IMR-90 (cell line): ENCODE measurements at regions of chr4 and their contacts with region 1.

Region 1: DNA sequence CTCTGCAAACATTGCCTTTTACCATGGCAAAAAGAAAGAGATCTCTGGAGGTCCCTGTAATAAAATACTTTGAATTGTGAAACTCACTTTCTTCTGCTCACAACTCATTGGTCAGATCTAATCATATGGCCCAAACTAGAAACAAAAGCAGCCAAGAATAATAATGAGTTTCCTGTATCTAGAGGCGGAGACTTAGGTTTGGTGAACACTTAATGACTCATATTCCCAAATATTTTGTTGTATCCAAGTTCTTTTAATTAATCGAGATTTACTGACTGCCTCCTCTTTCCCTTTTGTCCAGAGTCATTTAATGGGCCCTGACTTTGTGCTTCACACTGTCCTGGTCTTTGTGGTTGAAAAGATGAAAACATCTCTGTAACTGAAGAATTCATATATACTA is 190.6 kb downstream of the CCSER1 start:
- DNase-seq: peak; percentile 94
- ATAC-seq: peak; percentile 82
- H3K4me3 ChIP-seq: peak overlapping the region; percentile 31; the same call in 1 of the 2 replicates
- H3K27ac ChIP-seq: peak overlapping the region; percentile 77; the same call in 1 of the 2 replicates
- H3K4me1 ChIP-seq: peaks cover 3% of the 10 kb centered on the region
- H3K27me3 ChIP-seq: 0 out of 2 replicates have a peak, but pooled peaks cover 2% of the 10 kb centered on the region
- CTCF ChIP-seq: no peak
- POLR2A ChIP-seq: 0 out of 2 replicates have a peak, but pooled peaks have one; percentile 48
- RAD21 ChIP-seq: no peak

Region 2: DNA sequence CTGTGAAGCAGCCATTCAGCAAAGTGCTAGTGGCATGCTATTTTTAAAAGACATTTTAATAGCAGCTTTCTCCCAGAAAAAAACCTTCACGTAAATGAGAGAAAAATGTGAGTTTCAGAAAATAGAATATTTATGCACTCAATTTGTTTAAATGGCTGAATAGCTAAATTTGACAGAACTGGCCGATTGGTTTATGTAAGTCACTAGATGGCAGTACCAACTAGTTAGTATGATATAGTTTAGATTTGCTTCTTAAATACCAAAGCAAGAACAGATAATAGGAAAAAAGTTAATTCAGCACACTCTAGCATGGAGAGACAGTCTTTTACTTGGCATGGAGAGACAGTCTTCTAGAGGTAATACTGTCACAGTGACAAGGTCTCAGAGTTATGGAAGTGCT is 730.9 kb before region 1 on chr4:
- CTCF ChIA-PET with region 1: no interaction called
- POLR2A ChIA-PET with region 1: no interaction called
- dilution Hi-C with region 1: no loop called
- in situ Hi-C with region 1: no loop called
- intact Hi-C with region 1: no loop called
- DNase-seq: peak; percentile 20
- ATAC-seq: peak; percentile 48; the same call in 1 of the 2 replicates
- H3K4me3 ChIP-seq: no peak overlapping the region
- H3K27ac ChIP-seq: no peak overlapping the region
- H3K4me1 ChIP-seq: no peaks in the 10 kb centered on the region
- H3K27me3 ChIP-seq: no peaks in the 10 kb centered on the region
- CTCF ChIP-seq: no peak
- POLR2A ChIP-seq: no peak
- RAD21 ChIP-seq: peak; percentile 17; the same call in 1 of the 2 replicates

Region 3: DNA sequence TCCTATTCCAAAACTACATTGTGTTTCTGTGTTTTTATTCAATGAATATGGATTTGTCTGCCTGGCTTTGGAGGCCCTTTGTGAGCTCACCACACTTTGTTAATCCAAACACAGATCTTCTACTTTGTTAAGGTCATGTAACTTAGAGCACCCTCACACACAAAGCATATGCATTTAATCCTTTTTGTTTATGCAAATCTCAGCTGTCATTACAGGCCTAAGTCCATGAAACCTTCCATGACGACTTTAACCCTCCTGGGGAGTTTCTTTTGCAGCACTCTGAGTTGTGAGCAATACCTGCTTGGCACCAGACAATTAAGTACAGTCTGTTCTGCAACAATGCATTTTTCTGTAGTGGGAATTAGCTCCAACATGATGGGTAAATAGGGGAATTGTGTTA is 175.7 kb before region 1 on chr4:
- CTCF ChIA-PET with region 1: no interaction called
- POLR2A ChIA-PET with region 1: no interaction called
- dilution Hi-C with region 1: no loop called
- in situ Hi-C with region 1: no loop called
- intact Hi-C with region 1: no loop called
- DNase-seq: no peak
- ATAC-seq: no peak
- H3K4me3 ChIP-seq: no peak overlapping the region
- H3K27ac ChIP-seq: no peak overlapping the region
- H3K4me1 ChIP-seq: no peaks in the 10 kb centered on the region
- H3K27me3 ChIP-seq: no peaks in the 10 kb centered on the region
- CTCF ChIP-seq: no peak
- POLR2A ChIP-seq: no peak
- RAD21 ChIP-seq: no peak

Region 4: GRCh38 chr4:90357117-90357710 is 39.4 kb after region 1 on chr4:
- CTCF ChIA-PET with region 1: no interaction called
- POLR2A ChIA-PET with region 1: no interaction called
- dilution Hi-C with region 1: no loop called
- in situ Hi-C with region 1: no loop called
- intact Hi-C with region 1: loop called (anchors 2 kb)
- DNase-seq: peak; percentile 77
- ATAC-seq: peak; percentile 62
- H3K4me3 ChIP-seq: no peak overlapping the region
- H3K27ac ChIP-seq: no peak overlapping the region
- H3K4me1 ChIP-seq: no peaks in the 10 kb centered on the region
- H3K27me3 ChIP-seq: no peaks in the 10 kb centered on the region
- CTCF ChIP-seq: peak; percentile 69
- POLR2A ChIP-seq: no peak
- RAD21 ChIP-seq: peak; percentile 77

Region 5: GRCh38 chr4:91113130-91113706 is 795.4 kb after region 1 on chr4:
- CTCF ChIA-PET with region 1: no interaction called
- POLR2A ChIA-PET with region 1: no interaction called
- dilution Hi-C with region 1: no loop called
- in situ Hi-C with region 1: no loop called
- intact Hi-C with region 1: loop called (anchors 10 kb)
- DNase-seq: peak; percentile 6
- ATAC-seq: no peak
- H3K4me3 ChIP-seq: no peak overlapping the region
- H3K27ac ChIP-seq: no peak overlapping the region
- H3K4me1 ChIP-seq: no peaks in the 10 kb centered on the region
- H3K27me3 ChIP-seq: no peaks in the 10 kb centered on the region
- CTCF ChIP-seq: peak; percentile 40
- POLR2A ChIP-seq: no peak
- RAD21 ChIP-seq: peak; percentile 46

Region 6: GRCh38 chr4:92172203-92172602 is 1854.4 kb after region 1 on chr4:
- CTCF ChIA-PET with region 1: no interaction called
- POLR2A ChIA-PET with region 1: no interaction called
- dilution Hi-C with region 1: no loop called
- in situ Hi-C with region 1: no loop called
- intact Hi-C with region 1: loop called (anchors 5 kb)
- DNase-seq: no peak
- ATAC-seq: peak; percentile 48; the same call in 1 of the 2 replicates
- H3K4me3 ChIP-seq: no peak overlapping the region
- H3K27ac ChIP-seq: no peak overlapping the region
- H3K4me1 ChIP-seq: no peaks in the 10 kb centered on the region
- H3K27me3 ChIP-seq: no peaks in the 10 kb centered on the region; the same call in 1 of the 2 replicates
- CTCF ChIP-seq: peak; percentile 46
- POLR2A ChIP-seq: no peak
- RAD21 ChIP-seq: peak; percentile 50

Region 7: DNA sequence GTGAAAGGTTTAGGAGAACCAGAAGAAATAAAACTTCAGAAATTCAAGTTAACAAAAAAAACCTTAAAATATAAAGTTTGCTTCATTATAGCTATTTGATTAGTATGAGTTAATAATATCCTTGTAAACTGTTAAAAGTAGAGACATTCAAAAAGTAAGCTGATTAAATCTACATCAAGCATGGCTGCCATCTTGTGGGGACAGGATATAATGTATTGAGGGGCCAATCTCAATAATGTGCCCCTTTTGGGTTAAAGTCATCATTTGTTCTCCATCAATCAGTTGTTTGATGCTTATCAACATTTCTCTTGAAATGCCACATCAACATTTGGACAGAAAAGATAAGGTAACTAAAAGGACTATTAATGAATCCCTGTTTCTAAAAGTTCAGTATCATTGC is 1981.4 kb after region 1 on chr4:
- CTCF ChIA-PET with region 1: no interaction called
- POLR2A ChIA-PET with region 1: no interaction called
- dilution Hi-C with region 1: no loop called
- in situ Hi-C with region 1: no loop called
- intact Hi-C with region 1: loop called (anchors 2 kb)
- DNase-seq: peak; percentile 21
- ATAC-seq: peak; percentile 42; the same call in 1 of the 2 replicates
- H3K4me3 ChIP-seq: no peak overlapping the region
- H3K27ac ChIP-seq: no peak overlapping the region
- H3K4me1 ChIP-seq: no peaks in the 10 kb centered on the region
- H3K27me3 ChIP-seq: peaks cover 12% of the 10 kb centered on the region
- CTCF ChIP-seq: peak; percentile 49
- POLR2A ChIP-seq: no peak
- RAD21 ChIP-seq: peak; percentile 63